GM13977 (cell line): ENCODE measurements at regions of chr17 and their contacts with region 1.

Region 1: GRCh38 chr17:76014184-76014924 is 12.8 kb downstream of the EVPL start:
- DNase-seq: peak; percentile 94
- CTCF ChIP-seq: peak; percentile 99

Region 2: DNA sequence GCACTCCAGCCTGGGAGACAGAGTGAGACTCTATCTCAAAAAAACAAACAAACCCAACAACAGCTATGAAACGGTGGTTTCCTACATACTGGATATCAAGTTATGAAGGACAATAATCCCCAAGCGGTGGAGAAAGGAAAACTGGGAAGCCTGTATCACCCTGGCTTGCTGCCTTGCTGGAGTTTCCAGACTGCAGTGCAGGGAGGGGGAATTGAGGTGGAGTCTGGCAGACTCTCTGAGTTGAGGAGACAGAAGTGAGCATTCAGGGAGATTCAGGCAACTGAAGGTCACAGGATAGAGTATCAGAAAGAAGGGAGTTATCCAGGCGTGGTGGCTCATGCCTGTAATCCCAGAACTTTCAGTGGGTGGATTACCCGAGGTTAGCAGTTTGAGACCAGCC is 281.8 kb after region 1 on chr17:
- in situ Hi-C with region 1: loop called (anchors 10 kb)
- DNase-seq: no peak
- CTCF ChIP-seq: no peak